ENCODE measurements at regions of chr12 and their contacts with region 1.

Region 1: GRCh38 chr12:68521321-68521839 is 89.3 kb upstream of the RAP1B start:
- DNase-seq: no peak
- ATAC-seq: no peak
- H3K4me3 ChIP-seq: no peak overlapping the region
- H3K4me3 Mint-ChIP-seq: no peak overlapping the region
- H3K27ac ChIP-seq: no peak overlapping the region
- H3K27ac Mint-ChIP-seq: no peak overlapping the region
- H3K4me1 ChIP-seq: no peaks in the 10 kb centered on the region
- H3K4me1 Mint-ChIP-seq: peaks cover 0 to 5% (median 0%) of the 10 kb centered on the region in 3 donors
- H3K27me3 ChIP-seq: no peaks in the 10 kb centered on the region
- H3K27me3 Mint-ChIP-seq: no peaks in the 10 kb centered on the region

Region 2: DNA sequence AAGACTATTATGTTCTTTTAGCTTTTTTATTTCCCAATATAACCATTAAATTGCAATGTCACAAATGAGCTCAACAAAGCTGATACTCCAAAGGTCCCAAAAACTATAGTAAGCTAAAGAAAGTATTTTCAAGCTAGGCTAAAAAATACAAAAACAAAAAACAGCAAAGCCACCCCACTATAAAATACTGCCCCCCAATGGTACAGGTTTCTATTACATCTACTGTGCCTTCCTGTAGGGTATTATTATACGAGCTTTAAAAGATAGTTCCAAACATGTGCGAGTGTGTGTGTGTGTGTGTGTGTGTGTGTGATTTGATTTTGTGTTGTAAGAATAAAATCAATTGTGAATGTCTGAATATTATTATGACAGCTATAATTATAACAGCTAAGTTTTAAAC is 362.9 kb before region 1 on chr12:
- CTCF ChIA-PET with region 1: no interaction called
- POLR2A ChIA-PET with region 1: no interaction called
- DNase-seq: peak in 6 of 35 experiments; percentile 3 to 72 (median 14)
- ATAC-seq: peak in 2 of 4 experiments; percentile 43 to 47
- H3K4me3 ChIP-seq: peak overlapping the region in 1 of 2 donors; percentile 30
- H3K4me3 Mint-ChIP-seq: peak overlapping the region in 1 of 3 donors; percentile 58
- H3K27ac ChIP-seq: no peak overlapping the region
- H3K27ac Mint-ChIP-seq: no peak overlapping the region
- H3K4me1 ChIP-seq: peaks cover 0 to 4% of the 10 kb centered on the region in 2 experiments
- H3K4me1 Mint-ChIP-seq: peaks cover 10 to 40% (median 37%) of the 10 kb centered on the region in 3 donors
- H3K27me3 ChIP-seq: no peaks in the 10 kb centered on the region
- H3K27me3 Mint-ChIP-seq: no peaks in the 10 kb centered on the region

Region 3: DNA sequence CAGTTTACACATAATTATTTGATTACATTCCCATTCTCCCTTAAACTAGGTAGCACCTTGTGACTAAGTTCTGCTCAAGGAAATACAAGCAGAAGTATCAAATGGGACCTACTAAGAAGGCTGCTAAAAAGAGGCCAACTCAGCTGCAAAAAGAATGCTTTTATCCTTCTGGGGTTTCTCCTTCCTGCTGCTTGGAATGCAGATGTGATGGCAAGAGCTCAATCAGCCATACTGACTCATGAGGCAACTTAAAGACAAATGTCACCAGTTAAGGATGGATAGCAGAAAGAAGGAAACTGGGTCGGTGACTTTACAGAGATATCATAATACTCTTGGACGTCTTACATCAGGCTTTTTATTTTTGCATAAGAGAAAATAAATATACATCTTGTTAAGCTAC is 51.3 kb after region 1 on chr12:
- CTCF ChIA-PET with region 1: interaction called in 1 of 2 experiments, 15 read pairs
- POLR2A ChIA-PET with region 1: no interaction called
- DNase-seq: no peak
- ATAC-seq: no peak
- H3K4me3 ChIP-seq: no peak overlapping the region
- H3K4me3 Mint-ChIP-seq: no peak overlapping the region
- H3K27ac ChIP-seq: no peak overlapping the region
- H3K27ac Mint-ChIP-seq: peak overlapping the region in 1 of 2 donors; percentile 5
- H3K4me1 ChIP-seq: peaks cover 1 to 4% of the 10 kb centered on the region in 2 experiments
- H3K4me1 Mint-ChIP-seq: peaks cover 24 to 35% (median 25%) of the 10 kb centered on the region in 3 donors
- H3K27me3 ChIP-seq: no peaks in the 10 kb centered on the region
- H3K27me3 Mint-ChIP-seq: no peaks in the 10 kb centered on the region